ENCODE measurements at regions of chr16 and their contacts with region 1.

Region 1: GRCh38 chr16:67841764-67842508 is at the start of gene THAP11:
- DNase-seq: peak; percentile 96 to 97
- ATAC-seq: peak; percentile 92
- H3K4me3 ChIP-seq: peak within 1 kb of the TSS; percentile 50 to 81
- H3K27ac ChIP-seq: peak within 1 kb of the TSS in 1 of 2 donors; percentile 97
- H3K4me1 ChIP-seq: peaks cover 0 to 2% of the 10 kb centered on the region in 2 donors
- H3K27me3 ChIP-seq: no peaks in the 10 kb centered on the region
- total RNA-seq, gene THAP11: 21.5 to 24.7 TPM

Region 2: DNA sequence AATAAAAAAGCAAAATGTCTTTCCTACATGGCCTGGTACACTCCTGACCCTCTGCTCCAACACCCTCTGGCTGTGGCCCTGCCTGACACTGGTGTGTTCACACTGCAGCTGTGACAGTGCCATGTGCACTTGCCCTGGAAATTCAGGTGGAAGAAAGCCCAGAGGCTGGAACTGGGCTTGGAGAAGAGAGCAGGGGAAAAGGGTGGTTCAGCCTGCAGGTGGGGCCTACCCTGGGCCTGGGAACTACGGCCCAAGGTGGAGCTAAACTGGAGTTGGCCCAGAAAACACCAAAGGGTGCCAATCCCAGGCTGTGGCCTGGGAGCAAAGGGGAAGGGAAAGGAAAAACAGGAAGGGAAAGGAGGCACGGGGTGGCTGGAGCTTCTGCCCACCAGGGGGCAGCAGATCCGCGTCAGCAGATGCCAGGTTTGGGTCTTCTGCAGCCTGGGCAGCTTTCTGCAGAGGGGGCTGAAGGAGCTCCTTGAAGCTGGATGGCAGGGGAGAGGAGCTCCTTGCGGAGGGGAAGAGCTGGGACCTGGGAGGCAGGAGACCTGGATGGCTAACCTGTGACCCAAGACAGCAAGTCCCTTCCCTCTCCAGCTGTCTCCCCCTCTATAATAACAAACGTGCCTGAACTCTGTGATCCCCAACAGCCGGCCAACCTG is 295.0 kb before region 1 on chr16:
- intact Hi-C with region 1: no loop called
- DNase-seq: peak; percentile 76 to 93
- ATAC-seq: peak; percentile 67
- H3K4me3 ChIP-seq: no peak overlapping the region
- H3K27ac ChIP-seq: no peak overlapping the region
- H3K4me1 ChIP-seq: no peaks in the 10 kb centered on the region
- H3K27me3 ChIP-seq: no peaks in the 10 kb centered on the region

Region 3: GRCh38 chr16:67806428-67807147 is 35.3 kb before region 1 on chr16 and contains the starts of genes RANBP10 and TSNAXIP1:
- intact Hi-C with region 1: loop called in 1 of 2 experiments (anchors 5 kb)
- DNase-seq: peak; percentile 98 to 99
- ATAC-seq: peak; percentile 98
- H3K4me3 ChIP-seq: peak within 1 kb of the TSS; percentile 49 to 87
- H3K27ac ChIP-seq: peak within 1 kb of the TSS in 1 of 2 donors; percentile 21
- H3K4me1 ChIP-seq: no peaks in the 10 kb centered on the region
- H3K27me3 ChIP-seq: no peaks in the 10 kb centered on the region
- total RNA-seq, gene RANBP10: 17.7 to 21.6 TPM
- total RNA-seq, gene TSNAXIP1: 0.84 to 1.1 TPM

Region 4: DNA sequence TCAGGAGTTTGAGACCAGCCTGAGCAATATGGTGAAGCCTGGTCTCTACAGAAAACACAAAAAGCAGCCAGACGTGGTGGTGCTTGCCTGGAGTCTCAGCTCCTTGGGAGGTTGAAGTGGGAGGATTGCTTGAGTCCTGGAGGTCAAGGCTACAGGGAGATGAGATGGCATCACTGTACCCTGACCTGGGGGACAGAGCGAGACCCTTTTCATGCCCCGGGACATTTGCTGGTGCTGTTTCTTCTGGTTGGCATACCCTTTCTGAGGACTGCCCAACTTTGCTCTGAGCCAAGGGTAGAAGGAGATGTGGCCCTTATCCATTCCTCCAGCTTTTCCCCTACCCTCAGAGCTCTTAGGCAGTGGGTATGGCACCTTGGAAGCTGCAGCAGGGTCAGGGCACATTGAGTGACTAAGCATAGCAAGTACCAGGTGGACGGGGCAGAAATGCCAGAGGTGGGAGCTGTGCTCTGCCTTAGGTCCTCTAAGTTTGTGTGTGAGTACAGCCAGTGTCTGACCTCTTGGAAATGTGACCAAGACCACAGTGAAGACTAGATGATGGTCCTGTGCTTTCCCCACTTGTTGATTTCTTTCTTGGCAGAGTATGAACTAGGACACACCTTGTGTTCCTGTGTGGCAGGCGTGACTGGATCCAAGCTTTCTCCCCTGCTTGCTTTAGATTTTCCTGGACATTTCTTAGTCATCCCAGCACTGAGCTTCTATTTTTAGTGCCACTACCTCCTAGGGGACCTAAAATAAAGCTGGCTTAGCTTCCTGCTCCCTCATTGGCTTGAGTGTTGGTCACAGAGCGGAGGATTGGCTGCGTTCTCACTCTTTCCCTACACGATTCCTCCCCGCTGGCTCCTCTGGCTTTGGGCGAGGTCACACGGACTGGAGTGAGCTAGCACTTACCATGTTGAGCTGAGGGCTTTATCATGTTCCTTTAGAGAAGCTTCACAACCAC is 21.0 kb after region 1 on chr16:
- intact Hi-C with region 1: loop called in 1 of 2 experiments (anchors 1 kb)
- DNase-seq: peak; percentile 88 to 91
- ATAC-seq: peak; percentile 92
- H3K4me3 ChIP-seq: no peak overlapping the region
- H3K27ac ChIP-seq: peak overlapping the region; percentile 93 to 98
- H3K4me1 ChIP-seq: peaks cover 4 to 7% of the 10 kb centered on the region in 2 donors
- H3K27me3 ChIP-seq: no peaks in the 10 kb centered on the region

Region 5: GRCh38 chr16:67883872-67884261 is 41.9 kb after region 1 on chr16:
- intact Hi-C with region 1: loop called in 1 of 2 experiments (anchors 5 kb)
- DNase-seq: peak; percentile 70 to 89
- ATAC-seq: peak; percentile 62
- H3K4me3 ChIP-seq: no peak overlapping the region
- H3K27ac ChIP-seq: peak overlapping the region in 1 of 2 donors; percentile 6
- H3K4me1 ChIP-seq: no peaks in the 10 kb centered on the region
- H3K27me3 ChIP-seq: no peaks in the 10 kb centered on the region

Region 6: DNA sequence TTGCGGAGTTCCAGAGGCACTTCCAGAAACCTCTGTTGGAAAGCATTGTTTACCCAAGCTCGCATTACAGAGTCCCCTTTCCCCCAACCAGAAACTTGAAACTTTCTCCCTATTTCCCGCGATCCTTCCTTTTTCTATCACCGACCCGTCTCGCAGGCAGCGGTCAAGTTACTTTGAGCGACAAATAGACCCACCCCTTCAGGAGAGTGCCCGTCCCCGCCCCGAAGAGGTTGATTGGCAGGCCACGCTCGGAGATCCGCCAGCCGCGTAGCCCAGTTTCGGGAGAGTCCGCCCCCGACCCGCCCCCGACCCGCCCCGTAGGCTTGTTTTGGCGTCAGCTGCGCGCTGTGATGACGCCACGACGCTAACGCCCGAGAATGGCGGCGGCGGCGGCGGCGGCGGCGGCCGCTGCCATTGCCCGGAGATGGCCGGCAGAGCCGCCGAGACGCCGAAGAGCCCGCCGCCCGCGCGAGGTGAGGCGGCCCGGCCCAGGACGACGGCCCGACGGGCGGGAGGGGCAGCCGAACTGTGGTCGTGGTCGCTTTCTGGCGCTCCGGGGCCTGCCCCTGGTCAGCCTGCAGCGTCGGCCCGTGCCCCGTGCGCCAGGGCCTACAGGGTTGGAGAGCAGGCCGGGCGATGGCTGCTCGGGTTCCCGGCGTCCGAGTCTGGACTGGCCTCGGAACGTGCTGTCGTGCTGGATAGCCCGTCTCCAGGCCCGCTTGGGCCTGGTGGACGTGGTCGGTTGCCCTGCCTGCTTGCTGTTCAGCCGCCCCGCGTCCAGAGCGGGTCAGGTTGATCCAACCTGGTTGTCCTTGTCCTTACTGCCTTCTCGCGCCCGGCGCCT is 51.2 kb after region 1 on chr16 and contains the start of gene PSKH1:
- intact Hi-C with region 1: loop called in 1 of 2 experiments (anchors 2 kb)
- DNase-seq: peak; percentile 98 to 99
- ATAC-seq: peak; percentile 95
- H3K4me3 ChIP-seq: peak within 1 kb of the TSS; percentile 85 to 94
- H3K27ac ChIP-seq: peak within 1 kb of the TSS; percentile 57 to 97
- H3K4me1 ChIP-seq: peaks cover 0 to 2% of the 10 kb centered on the region in 2 donors
- H3K27me3 ChIP-seq: no peaks in the 10 kb centered on the region
- total RNA-seq, gene PSKH1: 29.6 to 30.4 TPM

Measured in aorta (tissue), 5 donors.